Activated T-helper 1 cell treated with anti-CD3 and anti-CD28 coated beads, Interleukin-12 subunit alpha, Interleukin-12 subunit beta, Interleukin-2, Interleukin-4 antibody, amounts not matched to agents 30 ng/mL and 10 ng/mL and 1 ng/mL, durations not matched to agents 14 hours and 24 hours and 36 hours (primary cell): ENCODE measurements at regions of chr6 and their contacts with region 1.

Region 1: GRCh38 chr6:155174576-155175211 is 89.1 kb upstream of the CLDN20 start:
- DNase-seq: peak; percentile 66
- H3K4me3 Mint-ChIP-seq: peak overlapping the region; percentile 27
- H3K27ac Mint-ChIP-seq: peak overlapping the region; percentile 76
- H3K4me1 Mint-ChIP-seq: peaks cover 54% of the 10 kb centered on the region
- H3K27me3 Mint-ChIP-seq: no peaks in the 10 kb centered on the region

Region 2: GRCh38 chr6:154733012-154733625 is 441.6 kb before region 1 on chr6 and contains the start of gene SCAF8:
- intact Hi-C with region 1: loop called (anchors 1 kb)
- DNase-seq: peak; percentile 85
- H3K4me3 Mint-ChIP-seq: peak within 1 kb of the TSS; percentile 97
- H3K27ac Mint-ChIP-seq: peak within 1 kb of the TSS; percentile 96
- H3K4me1 Mint-ChIP-seq: peaks cover 33% of the 10 kb centered on the region
- H3K27me3 Mint-ChIP-seq: peaks cover 4% of the 10 kb centered on the region
- total RNA-seq, gene SCAF8: 37.7 and 40.9 TPM in 2 replicates

Region 3: DNA sequence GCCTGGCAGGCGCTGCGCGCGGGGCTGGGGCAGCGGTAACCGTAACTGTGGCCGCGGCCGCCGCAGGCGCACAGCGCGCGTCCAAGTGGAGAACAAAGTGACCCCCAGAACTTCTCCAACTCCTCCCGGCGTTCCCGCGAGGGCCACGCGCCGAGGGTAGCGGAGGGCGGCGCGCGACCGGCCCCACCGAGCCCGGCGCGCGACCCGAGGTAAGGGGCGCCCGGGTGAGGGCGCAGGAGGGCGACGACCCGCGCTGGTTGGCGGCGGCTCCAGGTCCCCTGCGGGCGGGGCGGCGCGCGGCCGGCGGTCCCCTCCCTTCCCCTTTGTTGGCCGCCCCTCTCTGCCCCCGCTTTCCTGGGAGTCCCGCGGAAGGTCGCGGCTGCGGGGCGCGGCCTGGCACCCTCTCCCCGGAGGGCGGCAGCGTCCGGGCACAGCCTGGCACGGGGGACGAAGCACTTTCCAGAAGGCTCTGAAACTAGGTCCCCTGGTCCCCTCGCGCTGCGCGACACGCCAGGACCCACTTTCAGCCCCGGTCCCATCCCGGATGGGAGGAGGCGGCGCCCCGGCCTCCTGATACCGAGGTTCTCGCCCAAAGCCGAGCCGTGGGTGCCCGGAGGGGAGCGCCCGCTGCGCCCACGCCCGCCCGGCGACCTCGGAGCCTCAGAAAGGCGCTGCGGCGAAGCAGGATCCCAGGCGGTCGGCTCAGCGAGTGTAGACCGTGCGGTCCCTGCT is 179.2 kb before region 1 on chr6 and contains the start of gene TIAM2:
- intact Hi-C with region 1: loop called (anchors 1 kb)
- DNase-seq: peak; percentile 11
- H3K4me3 Mint-ChIP-seq: peak within 1 kb of the TSS; percentile 71
- H3K27ac Mint-ChIP-seq: peak within 1 kb of the TSS; percentile 44
- H3K4me1 Mint-ChIP-seq: peaks cover 18% of the 10 kb centered on the region
- H3K27me3 Mint-ChIP-seq: peaks cover 16% of the 10 kb centered on the region
- total RNA-seq, gene TIAM2: 90.4 and 95.6 TPM in 2 replicates

Region 4: DNA sequence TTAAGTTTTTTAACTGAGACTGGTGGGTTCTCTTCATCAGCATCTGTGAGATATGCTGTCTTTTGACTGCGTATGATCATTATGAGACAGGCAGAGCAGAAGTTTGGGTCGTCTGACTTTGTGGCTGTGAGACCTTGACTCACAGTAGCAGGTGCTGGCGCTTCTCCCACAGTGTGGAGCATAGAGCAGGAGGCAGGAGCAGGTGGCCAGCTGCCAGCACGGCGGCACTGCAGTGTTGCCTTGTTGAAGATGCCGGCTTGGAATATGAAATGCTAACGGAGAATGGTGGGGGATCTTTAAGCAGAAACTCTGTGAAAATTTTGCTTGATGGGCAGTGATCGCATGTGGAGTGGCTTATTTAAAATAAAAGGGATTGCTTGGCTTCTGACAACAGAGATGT is 74.6 kb before region 1 on chr6:
- intact Hi-C with region 1: loop called (anchors 1 kb)
- DNase-seq: no peak
- H3K4me3 Mint-ChIP-seq: no peak overlapping the region
- H3K27ac Mint-ChIP-seq: no peak overlapping the region
- H3K4me1 Mint-ChIP-seq: peaks cover 32% of the 10 kb centered on the region
- H3K27me3 Mint-ChIP-seq: no peaks in the 10 kb centered on the region

Region 5: GRCh38 chr6:155154158-155154830 is 20.4 kb before region 1 on chr6:
- intact Hi-C with region 1: loop called (anchors 1 kb)
- DNase-seq: peak; percentile 48
- H3K4me3 Mint-ChIP-seq: peak overlapping the region; percentile 78
- H3K27ac Mint-ChIP-seq: peak overlapping the region; percentile 97
- H3K4me1 Mint-ChIP-seq: peaks cover 90% of the 10 kb centered on the region
- H3K27me3 Mint-ChIP-seq: peaks cover 2% of the 10 kb centered on the region

Region 6: DNA sequence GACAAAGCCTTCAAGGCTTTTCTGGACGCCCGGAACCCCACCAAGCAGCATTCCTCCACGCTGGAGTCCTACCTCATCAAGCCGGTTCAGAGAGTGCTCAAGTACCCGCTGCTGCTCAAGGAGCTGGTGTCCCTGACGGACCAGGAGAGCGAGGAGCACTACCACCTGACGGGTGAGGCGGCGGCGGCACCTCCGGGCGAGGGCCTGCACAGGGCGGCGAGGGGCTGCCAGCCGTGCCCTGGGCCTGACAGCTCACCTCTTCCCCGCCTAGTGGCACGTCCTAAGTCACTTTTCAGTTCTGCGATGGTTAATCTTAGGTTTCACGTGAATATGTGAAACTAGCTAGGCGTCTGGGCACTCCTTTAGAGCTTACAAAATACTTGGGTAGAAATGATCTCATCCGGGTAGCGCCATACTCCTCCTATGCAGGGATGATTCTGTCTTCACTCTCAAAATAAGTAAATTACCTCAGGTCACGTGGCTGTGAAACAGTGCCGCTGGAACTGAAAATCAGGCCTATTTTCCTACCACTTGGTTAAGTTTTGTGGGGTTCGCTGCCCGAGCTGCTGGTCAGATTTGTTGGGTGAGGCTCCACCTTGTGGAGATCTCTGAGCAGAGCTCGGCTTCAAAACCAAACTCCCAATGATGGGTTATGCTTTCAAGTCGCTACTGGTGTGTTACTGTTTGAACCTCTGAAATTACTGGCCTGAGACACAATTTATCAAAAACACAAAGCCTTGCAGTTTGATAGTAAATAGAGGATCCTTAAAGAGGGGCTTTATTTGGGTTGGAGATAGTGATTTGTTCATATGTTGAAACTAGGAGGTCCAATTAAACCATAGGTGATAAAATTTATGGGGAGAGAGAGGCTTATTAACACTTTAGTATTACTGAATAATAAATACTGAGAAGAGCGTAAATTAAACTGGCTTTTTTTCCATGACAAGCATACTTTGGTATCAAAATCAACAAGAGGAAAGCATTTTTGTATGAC is 73.6 kb after region 1 on chr6:
- intact Hi-C with region 1: loop called (anchors 1 kb)
- DNase-seq: no peak
- H3K4me3 Mint-ChIP-seq: no peak overlapping the region
- H3K27ac Mint-ChIP-seq: no peak overlapping the region
- H3K4me1 Mint-ChIP-seq: peaks cover 6% of the 10 kb centered on the region
- H3K27me3 Mint-ChIP-seq: no peaks in the 10 kb centered on the region